Activated naive CD4-positive, alpha-beta T cell treated with anti-CD3 and anti-CD28 coated beads, Interleukin-2, amount 10 ng/mL, durations not matched to agents 7 days and 5 days (primary cell): ENCODE measurements at regions of chr17 and their contacts with region 1.

Region 1: GRCh38 chr17:55527540-55528118 is 16.4 kb upstream of the SMIM36 start:
- DNase-seq: peak; percentile 45
- H3K4me3 Mint-ChIP-seq: no peak overlapping the region
- H3K27ac Mint-ChIP-seq: no peak overlapping the region
- H3K4me1 Mint-ChIP-seq: no peaks in the 10 kb centered on the region
- H3K27me3 Mint-ChIP-seq: no peaks in the 10 kb centered on the region

Region 2: DNA sequence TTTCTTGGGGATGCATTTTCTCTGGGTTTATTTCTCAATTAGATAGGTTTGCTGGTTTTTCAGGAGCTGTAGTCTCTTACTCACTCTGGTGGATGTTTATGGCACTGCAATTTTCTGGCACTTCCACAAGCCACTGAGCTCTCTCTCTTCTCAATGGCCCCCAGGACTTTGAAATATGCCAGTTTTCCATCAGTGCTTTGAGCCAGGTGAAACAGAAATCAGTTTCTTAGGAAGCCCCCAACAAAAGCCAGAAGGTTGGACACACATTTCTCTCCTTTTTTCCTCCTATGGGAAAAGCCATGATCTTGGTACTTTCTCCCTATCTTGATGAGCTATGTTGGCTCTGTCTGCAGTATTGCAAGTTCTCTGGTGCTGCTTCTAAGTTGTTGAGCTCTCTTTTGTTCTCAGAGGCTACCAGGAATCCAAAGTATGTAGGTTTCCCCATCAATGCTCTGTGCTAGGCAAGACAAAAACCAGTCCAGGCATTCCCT is 74.3 kb after region 1 on chr17:
- CTCF ChIA-PET with region 1: interaction called, 139 read pairs
- DNase-seq: peak; percentile 33
- H3K4me3 Mint-ChIP-seq: no peak overlapping the region
- H3K27ac Mint-ChIP-seq: no peak overlapping the region
- H3K4me1 Mint-ChIP-seq: peaks cover 4% of the 10 kb centered on the region
- H3K27me3 Mint-ChIP-seq: peaks cover 7% of the 10 kb centered on the region

Region 3: DNA sequence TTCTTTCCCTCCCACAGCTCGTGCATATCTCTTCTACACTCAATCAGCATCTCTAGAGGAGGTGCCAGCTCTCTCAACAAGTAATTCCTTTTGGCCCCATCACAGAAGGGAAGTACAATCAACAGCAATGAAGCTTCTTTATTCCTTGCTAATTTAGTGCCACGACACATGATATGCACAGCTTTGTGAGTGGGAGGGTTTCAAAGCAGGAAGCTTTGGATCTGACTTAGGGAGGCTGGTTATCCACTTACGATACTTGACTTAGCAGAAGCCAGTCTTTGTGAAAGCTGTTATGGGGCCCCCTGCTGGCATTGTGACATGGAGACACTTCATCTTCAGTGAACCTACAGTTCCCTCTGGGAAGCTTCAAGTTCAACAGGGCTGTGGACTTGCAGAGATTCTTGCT is 114.0 kb after region 1 on chr17:
- CTCF ChIA-PET with region 1: interaction called, 32 read pairs
- DNase-seq: peak; percentile 55
- H3K4me3 Mint-ChIP-seq: no peak overlapping the region
- H3K27ac Mint-ChIP-seq: no peak overlapping the region
- H3K4me1 Mint-ChIP-seq: peaks cover 10% of the 10 kb centered on the region
- H3K27me3 Mint-ChIP-seq: no peaks in the 10 kb centered on the region

Region 4: DNA sequence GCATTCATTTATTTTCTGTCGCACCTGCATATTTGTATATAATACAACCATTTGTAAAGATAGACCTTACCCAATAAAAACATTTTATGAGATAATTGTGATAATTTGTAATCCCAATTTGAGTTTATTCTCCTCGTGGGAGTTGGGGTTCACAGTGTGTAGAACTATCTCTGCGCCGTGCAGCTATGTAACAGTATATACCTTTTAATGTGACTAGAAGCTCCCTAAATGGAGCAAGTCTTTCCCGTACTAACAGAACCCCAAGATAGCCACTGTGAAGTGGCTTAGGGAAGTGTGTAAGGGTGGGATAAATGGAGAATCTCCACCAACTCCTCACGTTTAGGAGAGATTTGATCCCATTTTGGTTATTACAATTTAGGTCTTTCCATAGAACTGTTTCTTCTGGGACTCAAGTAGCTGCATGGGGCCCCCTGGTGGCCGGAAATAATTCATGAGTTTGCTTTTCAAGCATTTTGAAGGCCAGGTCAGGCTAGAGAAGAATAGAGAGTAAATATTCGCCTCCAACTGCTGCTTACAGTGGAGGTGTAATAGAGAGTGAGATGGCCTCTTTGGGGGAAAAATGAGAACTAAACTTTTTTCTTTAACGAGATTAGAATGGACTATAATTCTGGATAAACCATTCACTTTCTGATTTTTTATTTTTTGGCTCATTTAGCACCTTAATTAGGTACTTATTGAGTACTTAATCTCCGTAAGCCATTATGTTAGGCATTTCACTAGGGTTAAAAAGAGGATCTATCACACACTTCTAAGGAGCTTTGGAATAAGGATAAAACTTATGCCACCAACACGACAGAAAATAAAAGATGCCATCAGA is 190.5 kb after region 1 on chr17:
- CTCF ChIA-PET with region 1: interaction called, 36 read pairs
- DNase-seq: peak; percentile 75
- H3K4me3 Mint-ChIP-seq: no peak overlapping the region
- H3K27ac Mint-ChIP-seq: no peak overlapping the region
- H3K4me1 Mint-ChIP-seq: no peaks in the 10 kb centered on the region
- H3K27me3 Mint-ChIP-seq: peaks cover 25% of the 10 kb centered on the region

Region 5: GRCh38 chr17:55735731-55736405 is 208.2 kb after region 1 on chr17:
- CTCF ChIA-PET with region 1: interaction called, 12 read pairs
- DNase-seq: peak; percentile 56
- H3K4me3 Mint-ChIP-seq: no peak overlapping the region
- H3K27ac Mint-ChIP-seq: no peak overlapping the region
- H3K4me1 Mint-ChIP-seq: peaks cover 6% of the 10 kb centered on the region
- H3K27me3 Mint-ChIP-seq: peaks cover 5% of the 10 kb centered on the region

Region 6: DNA sequence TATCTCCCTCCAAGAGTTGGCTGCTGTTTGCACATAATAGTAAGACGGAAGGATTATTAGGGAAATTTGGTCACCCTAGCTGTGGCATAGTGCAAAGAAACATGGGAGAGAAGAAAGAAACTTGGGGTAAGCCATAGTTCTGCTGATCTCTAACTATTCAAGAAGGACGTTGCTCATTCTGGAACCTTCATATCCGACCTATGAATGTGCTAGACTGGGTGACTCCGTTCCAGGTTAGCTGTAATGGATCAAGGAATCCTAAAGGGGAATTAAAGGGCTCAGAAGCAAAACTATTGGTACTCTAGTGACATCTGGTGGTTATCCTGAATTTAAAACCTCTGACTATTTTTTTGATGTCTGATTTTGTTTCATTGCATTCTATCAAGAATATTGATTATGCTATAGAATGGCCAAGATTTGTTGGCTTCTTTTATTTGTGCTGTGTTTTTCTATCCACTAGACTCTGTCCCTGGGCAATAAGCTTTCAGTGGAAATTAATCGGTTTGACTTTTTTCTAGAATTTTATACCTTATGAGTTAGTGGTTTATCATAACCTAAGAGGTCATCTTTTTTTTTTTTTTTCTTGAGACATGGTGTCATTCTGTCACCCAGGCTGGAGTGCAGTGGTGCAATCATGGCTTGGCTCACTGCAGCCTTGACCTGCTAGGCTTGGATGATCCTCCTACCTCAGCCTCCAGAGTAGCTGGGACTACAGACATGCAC is 242.7 kb after region 1 on chr17:
- CTCF ChIA-PET with region 1: interaction called, 23 read pairs
- DNase-seq: no peak
- H3K4me3 Mint-ChIP-seq: no peak overlapping the region
- H3K27ac Mint-ChIP-seq: no peak overlapping the region
- H3K4me1 Mint-ChIP-seq: no peaks in the 10 kb centered on the region
- H3K27me3 Mint-ChIP-seq: no peaks in the 10 kb centered on the region